Sigmoid colon (tissue), 7 donors: ENCODE measurements at regions of chrX and their contacts with region 1.

Region 1: GRCh38 chrX:107826238-107827029 is 768 bp downstream of the MID2 start:
- DNase-seq: peak; percentile 67
- H3K4me3 ChIP-seq: peak overlapping the region; percentile 46 to 60 (median 59)
- H3K27ac ChIP-seq: peak overlapping the region; percentile 91 to 94 (median 92)
- H3K4me1 ChIP-seq: peaks cover 0 to 12% (median 0%) of the 10 kb centered on the region in 4 donors
- H3K27me3 ChIP-seq: no peaks in the 10 kb centered on the region
- CTCF ChIP-seq: no peak
- EP300 ChIP-seq: no peak
- POLR2A ChIP-seq: no peak

Region 2: GRCh38 chrX:107348051-107348450 is 478.4 kb before region 1 on chrX:
- intact Hi-C with region 1: no loop called
- DNase-seq: no peak
- H3K4me3 ChIP-seq: no peak overlapping the region
- H3K27ac ChIP-seq: no peak overlapping the region
- H3K4me1 ChIP-seq: no peaks in the 10 kb centered on the region
- H3K27me3 ChIP-seq: no peaks in the 10 kb centered on the region
- CTCF ChIP-seq: no peak
- EP300 ChIP-seq: no peak
- POLR2A ChIP-seq: no peak

Region 3: DNA sequence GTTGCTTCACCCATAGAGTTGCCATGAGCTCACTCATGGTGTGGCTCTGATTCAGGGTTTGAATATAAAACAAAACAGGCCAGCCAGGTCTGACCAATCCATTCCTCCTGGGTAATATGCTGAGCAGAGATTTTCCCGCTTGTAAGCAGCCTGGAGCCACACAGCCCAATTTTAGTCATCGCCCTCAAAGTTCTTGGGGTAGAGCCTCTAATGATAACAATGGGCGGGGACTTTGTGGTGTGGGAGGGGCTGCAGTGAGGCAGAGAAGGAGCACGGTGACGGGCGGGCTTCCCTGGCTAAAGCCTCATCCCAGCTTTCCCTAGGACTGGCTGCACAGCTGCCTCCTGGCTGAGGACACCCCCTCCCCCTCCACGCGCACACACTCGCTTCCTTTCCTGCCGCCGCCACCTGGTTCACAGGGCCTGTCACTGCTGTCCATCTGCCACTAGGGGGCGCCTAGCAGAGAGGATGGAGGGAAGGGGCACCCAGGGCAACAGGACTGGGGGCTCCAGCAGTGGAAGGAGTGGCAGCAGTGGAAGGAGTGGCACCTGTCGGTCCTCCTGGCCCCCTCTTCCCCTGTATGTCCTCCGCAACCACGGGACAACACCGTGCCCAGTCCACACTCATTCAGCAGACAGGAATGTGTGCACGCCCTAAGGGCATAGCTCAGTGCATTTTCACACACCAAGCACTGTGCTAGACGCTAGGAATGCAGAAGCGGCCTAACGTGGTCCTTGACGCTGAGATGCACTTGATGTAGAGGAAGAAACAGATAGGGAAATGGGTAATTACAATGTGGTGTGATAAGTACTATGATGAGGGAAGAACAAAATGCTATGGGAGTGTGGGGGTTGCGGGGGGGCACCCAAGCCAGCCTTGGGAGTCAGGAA is 171.3 kb before region 1 on chrX:
- intact Hi-C with region 1: loop called (anchors 5 kb)
- DNase-seq: peak; percentile 88
- H3K4me3 ChIP-seq: peak overlapping the region in 1 of 4 donors; percentile 9
- H3K27ac ChIP-seq: peak overlapping the region; percentile 10 to 60 (median 36)
- H3K4me1 ChIP-seq: peaks cover 0 to 13% (median 4%) of the 10 kb centered on the region in 4 donors
- H3K27me3 ChIP-seq: no peaks in the 10 kb centered on the region
- CTCF ChIP-seq: peak; percentile 43 to 66 (median 58)
- EP300 ChIP-seq: no peak
- POLR2A ChIP-seq: no peak

Region 4: GRCh38 chrX:107672955-107673378 is 153.5 kb before region 1 on chrX:
- intact Hi-C with region 1: loop called (anchors 5 kb)
- DNase-seq: peak; percentile 93
- H3K4me3 ChIP-seq: peak overlapping the region in 1 of 4 donors; percentile 4
- H3K27ac ChIP-seq: peak overlapping the region; percentile 85 to 91 (median 86)
- H3K4me1 ChIP-seq: peaks cover 0 to 28% (median 7%) of the 10 kb centered on the region in 4 donors
- H3K27me3 ChIP-seq: no peaks in the 10 kb centered on the region
- CTCF ChIP-seq: peak; percentile 52 to 65 (median 60)
- EP300 ChIP-seq: peak in 2 of 4 donors; percentile 30 to 51
- POLR2A ChIP-seq: no peak

Region 5: GRCh38 chrX:108091266-108091877 is 264.9 kb after region 1 on chrX and contains the starts of genes ATG4A and PSMD10:
- intact Hi-C with region 1: loop called (anchors 5 kb)
- DNase-seq: peak; percentile 96
- H3K4me3 ChIP-seq: peak within 1 kb of the TSS; percentile 41 to 59 (median 56)
- H3K27ac ChIP-seq: peak within 1 kb of the TSS; percentile 79 to 87 (median 84)
- H3K4me1 ChIP-seq: peaks cover 0 to 16% (median 6%) of the 10 kb centered on the region in 4 donors
- H3K27me3 ChIP-seq: no peaks in the 10 kb centered on the region
- CTCF ChIP-seq: peak in 1 of 4 experiments; percentile 12
- EP300 ChIP-seq: no peak
- POLR2A ChIP-seq: peak; percentile 48 to 62
- total RNA-seq, gene ATG4A: 5.0 to 14.3 (median 8.0) TPM
- total RNA-seq, gene PSMD10: 21.6 to 51.7 (median 36.7) TPM